ENCODE measurements at regions of chr10 and their contacts with region 1.

Region 1: GRCh38 chr10:104300736-104301292 is 31.8 kb downstream of the GSTO2 start:
- DNase-seq: peak in 1 of 3 donors; percentile 28
- H3K4me3 ChIP-seq: no peak overlapping the region
- H3K27ac ChIP-seq: no peak overlapping the region
- H3K4me1 ChIP-seq: peaks cover 0 to 8% (median 7%) of the 10 kb centered on the region in 4 experiments
- H3K27me3 ChIP-seq: no peaks in the 10 kb centered on the region

Region 2: GRCh38 chr10:104284846-104285245 is 16.0 kb before region 1 on chr10:
- CTCF ChIA-PET with region 1: interaction called, 207 read pairs
- POLR2A ChIA-PET with region 1: interaction called, 3 read pairs
- DNase-seq: no peak
- H3K4me3 ChIP-seq: no peak overlapping the region
- H3K27ac ChIP-seq: no peak overlapping the region
- H3K4me1 ChIP-seq: no peaks in the 10 kb centered on the region
- H3K27me3 ChIP-seq: no peaks in the 10 kb centered on the region